Lower leg skin (tissue), 4 donors: ENCODE measurements at regions of chr6 and their contacts with region 1.

Region 1: GRCh38 chr6:41000248-41000647 is 38.8 kb downstream of the UNC5CL start:
- DNase-seq: no peak
- H3K4me3 ChIP-seq: no peak overlapping the region
- CTCF ChIP-seq: no peak
- POLR2A ChIP-seq: no peak

Region 2: DNA sequence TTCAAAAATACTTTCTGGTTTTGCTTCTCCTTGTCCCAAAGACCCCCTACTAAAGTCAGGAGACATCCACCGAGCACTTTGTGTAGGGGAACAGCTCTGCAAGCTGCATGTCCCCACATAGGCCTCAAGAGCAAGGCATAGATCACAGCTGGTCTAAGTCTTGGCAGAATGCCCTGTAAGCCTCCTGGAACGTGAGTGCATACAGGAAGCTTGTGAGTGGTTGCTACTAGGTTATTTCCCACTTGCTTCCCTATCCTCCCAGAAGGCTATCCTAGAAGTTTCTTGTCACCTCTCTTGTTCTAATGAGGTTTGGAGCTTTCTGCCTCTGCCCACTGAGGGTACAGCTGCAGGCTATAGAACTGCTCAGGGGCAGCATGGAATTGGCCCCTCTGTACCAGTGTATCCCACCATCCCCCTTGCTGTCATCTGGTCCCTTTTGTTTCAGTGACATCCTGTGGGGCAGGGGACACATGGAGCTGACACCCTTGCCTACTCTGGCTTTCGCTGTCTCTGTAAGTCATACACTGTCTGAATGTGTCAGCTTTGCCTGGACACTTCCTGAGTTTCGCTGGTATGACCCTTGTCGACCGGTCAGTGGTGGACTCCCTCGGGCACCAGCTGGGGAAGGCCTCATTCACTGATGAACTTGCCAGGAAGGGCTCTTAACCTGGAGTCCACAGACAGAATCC is 1642.1 kb before region 1 on chr6:
- intact Hi-C with region 1: no loop called
- DNase-seq: peak in 1 of 2 donors; percentile 48
- H3K4me3 ChIP-seq: no peak overlapping the region
- CTCF ChIP-seq: no peak
- POLR2A ChIP-seq: no peak

Region 3: GRCh38 chr6:41066867-41067304 is 66.6 kb after region 1 on chr6:
- intact Hi-C with region 1: loop called (anchors 10 kb)
- DNase-seq: peak; percentile 69 to 92
- H3K4me3 ChIP-seq: no peak overlapping the region
- CTCF ChIP-seq: peak in 1 of 3 donors; percentile 53
- POLR2A ChIP-seq: no peak